Right ventricle myocardium inferior (tissue), 1 donor: ENCODE measurements at regions of chr17 and their contacts with region 1.

Region 1: DNA sequence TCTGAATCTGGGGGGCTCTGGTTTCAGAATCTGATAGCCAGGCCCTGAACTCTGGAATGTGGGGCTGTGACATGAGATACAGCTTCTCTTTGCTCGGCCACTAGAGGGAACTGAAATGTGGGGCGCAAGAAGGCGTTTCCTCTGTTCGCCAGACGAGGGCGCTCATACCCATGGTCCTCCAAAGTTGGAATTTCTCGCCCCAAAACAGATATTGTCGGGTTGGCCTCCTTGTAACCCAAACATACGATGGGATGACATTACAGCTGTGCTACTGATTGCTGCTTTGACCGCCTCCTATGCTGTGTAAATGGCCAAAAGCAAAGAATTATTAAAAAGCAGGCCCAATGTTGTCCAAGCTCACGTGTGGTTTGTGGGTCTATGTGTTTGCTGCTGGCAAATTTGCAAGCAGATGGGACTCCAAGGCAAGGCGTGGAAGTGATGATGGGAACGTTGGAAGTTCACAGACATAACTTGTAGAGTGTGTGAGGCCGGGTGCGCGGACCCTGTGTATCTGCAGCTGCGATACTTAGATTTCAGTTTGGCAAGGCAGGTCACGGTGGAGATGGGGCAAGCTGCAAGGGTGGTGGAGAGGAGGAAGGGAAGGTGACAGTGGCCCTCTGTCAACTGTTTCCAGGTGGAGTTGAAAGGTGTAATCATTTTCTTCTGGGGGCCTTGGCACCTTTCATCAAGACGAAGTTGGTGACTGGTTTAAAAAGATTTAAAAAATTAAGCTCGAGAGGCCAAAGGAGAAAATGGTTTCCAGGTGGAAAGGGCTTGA is 13.0 kb upstream of the MSI2 start:
- DNase-seq: no peak
- ATAC-seq: peak; percentile 81

Region 2: DNA sequence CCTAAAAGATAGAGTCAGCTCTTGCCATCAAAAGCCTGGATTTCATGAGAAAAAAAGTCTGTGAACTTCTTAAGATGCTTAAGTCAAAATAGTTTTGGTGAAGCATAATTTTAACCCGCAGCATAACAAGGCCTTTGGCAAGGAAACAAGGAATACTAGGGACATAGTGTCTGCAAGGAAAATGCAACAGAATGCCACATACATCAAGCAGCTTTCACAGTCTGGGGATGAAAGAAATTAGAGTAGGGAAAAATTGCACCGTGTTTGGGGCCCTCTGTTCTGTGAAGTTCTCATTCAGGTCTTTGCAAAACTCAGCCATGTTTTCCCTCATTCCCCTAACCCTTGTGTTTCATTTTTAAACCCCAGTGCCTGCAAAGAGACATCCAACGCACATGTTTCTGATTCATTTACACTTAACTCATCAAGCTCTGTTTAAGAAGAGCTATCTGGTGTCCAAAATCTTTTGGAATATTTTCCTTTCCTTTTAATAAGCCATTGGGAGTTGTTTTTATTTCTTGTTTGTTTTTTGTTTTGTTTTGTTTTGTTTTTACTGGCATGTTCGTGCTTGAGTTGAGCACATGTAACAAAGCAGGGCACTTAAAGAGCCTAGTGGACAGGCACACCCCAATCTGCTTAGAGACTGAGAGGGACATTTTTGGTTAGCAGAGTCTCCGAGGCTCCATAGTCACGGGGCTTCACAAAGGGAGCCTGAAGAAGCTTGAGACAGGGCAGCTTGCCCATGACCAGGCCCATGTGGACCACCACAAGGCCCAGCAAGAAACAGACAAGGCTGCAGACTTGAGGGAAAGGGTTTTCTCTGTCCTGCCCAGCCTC is 973.6 kb before region 1 on chr17:
- intact Hi-C with region 1: no loop called
- DNase-seq: no peak
- ATAC-seq: no peak

Region 3: DNA sequence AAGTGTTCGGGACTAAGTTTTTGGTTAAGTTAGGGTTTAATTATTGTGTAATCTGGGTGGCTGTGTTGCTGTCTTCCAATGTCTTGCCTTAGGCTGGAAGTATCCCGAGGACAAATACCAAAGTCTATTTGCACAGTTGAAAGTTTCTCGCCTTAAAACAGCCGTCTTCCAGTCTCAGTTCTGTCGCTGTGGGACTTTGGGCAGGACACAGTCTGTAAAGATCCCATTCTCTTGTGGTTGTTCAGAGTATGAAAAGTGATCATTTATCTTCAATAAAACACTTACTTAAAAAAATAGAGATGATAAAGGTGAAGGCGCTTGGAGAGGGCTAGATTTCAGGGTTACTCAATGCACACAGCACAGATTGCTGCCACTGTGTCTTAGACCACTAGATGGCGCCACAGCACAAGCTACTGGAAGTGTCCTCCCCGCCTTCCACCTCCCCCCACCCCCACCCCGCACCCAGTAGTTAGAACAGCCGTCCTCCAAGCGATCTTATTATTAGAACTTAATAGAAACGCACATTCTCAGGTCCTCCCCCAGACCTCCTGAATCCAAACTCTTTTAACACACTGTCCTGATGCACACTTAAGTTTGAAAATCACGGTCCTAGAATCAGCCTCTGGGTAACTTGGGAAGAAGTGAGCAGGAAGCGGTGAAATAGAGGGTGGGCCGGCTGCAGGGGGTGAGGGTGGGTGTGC is 112.4 kb before region 1 on chr17:
- intact Hi-C with region 1: loop called (anchors 5 kb)
- DNase-seq: peak; percentile 85
- ATAC-seq: peak; percentile 86

Region 4: GRCh38 chr17:57186226-57187019 is 56.9 kb before region 1 on chr17:
- intact Hi-C with region 1: no loop called
- DNase-seq: no peak
- ATAC-seq: no peak

Region 5: GRCh38 chr17:57440522-57441485 is 197.4 kb after region 1 on chr17:
- intact Hi-C with region 1: loop called (anchors 5 kb)
- DNase-seq: peak; percentile 74
- ATAC-seq: peak; percentile 77

Region 6: GRCh38 chr17:57622683-57623433 is 379.5 kb after region 1 on chr17:
- intact Hi-C with region 1: no loop called
- DNase-seq: no peak
- ATAC-seq: peak; percentile 48

Region 7: GRCh38 chr17:57671667-57672632 is 428.6 kb after region 1 on chr17:
- intact Hi-C with region 1: loop called (anchors 5 kb)
- DNase-seq: peak; percentile 88
- ATAC-seq: peak; percentile 94

Region 8: DNA sequence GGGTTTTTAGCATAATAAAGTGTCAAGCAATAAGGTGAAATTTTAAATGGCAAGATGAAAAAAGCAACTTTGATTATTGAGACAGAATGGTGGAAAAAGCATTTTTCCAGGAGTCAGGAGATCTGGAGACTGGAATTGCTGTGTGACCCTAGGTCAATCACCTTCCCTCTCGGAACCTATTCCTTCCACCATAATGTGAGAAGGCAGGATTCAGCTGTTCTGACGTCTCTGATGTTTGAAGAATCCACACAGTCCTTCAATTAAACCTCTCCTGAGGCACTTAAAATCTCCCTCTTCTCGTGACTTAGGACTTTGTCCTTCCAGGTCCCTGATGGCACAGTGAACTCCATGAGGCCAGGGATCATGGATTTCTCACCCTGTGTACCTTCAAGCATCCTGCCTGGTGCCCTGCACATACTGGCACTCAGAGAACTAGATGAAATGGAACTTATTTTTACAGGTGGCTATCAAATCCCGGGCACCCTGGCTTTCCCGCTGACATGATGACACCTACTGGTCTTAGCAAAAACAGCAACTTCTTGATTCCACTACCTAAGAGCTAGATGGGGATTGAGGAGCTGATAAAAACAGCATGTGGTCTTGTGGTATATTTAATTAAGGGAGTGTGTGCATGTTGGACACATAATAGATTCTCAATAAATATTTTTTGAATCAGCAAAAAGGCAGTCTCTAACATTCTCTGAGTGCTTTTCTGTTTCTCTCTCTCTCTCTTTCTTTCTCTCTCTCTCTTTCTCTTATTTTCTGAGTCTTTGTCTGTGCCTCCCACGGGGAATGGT is 504.1 kb after region 1 on chr17:
- intact Hi-C with region 1: loop called (anchors 10 kb)
- DNase-seq: no peak
- ATAC-seq: no peak

Region 9: DNA sequence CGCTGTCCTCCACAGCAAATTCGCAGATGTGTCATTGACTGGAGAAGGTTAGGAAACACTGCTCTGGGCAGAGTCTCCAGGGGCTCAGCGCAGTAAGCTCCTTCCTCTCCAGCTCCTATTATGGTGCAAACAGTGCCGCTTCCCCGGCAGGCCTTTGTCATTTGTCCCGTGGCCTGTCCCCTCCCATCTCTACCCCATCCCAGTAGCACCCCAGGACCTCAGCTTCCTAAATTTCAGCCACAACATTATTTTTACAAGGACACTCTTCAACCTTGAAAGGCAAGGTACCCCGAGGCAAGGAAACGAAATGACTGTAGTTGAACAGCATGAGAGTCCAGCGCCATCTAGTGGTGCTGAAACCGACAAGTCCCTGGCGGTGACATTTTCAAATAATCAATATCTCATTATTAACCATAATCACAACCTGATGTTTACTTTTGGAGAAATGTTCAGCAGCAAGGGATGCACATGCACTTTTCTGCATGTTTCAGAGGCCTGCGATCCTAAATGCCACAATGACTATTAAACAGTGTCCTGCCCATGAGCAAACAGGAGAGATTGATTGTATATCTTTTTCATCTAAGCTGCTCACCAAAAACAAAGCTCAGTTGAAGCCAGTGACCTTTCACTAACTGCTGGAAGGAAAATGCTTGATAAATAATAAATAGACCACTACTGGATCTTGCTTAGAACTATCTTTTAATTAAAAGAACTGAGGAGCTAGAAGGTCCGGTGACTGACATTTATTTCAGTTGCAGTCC is 590.0 kb after region 1 on chr17:
- intact Hi-C with region 1: loop called (anchors 10 kb)
- DNase-seq: no peak
- ATAC-seq: peak; percentile 88